Psoas muscle (tissue), 8 donors: ENCODE measurements at regions of chr13 and their contacts with region 1.

Region 1: DNA sequence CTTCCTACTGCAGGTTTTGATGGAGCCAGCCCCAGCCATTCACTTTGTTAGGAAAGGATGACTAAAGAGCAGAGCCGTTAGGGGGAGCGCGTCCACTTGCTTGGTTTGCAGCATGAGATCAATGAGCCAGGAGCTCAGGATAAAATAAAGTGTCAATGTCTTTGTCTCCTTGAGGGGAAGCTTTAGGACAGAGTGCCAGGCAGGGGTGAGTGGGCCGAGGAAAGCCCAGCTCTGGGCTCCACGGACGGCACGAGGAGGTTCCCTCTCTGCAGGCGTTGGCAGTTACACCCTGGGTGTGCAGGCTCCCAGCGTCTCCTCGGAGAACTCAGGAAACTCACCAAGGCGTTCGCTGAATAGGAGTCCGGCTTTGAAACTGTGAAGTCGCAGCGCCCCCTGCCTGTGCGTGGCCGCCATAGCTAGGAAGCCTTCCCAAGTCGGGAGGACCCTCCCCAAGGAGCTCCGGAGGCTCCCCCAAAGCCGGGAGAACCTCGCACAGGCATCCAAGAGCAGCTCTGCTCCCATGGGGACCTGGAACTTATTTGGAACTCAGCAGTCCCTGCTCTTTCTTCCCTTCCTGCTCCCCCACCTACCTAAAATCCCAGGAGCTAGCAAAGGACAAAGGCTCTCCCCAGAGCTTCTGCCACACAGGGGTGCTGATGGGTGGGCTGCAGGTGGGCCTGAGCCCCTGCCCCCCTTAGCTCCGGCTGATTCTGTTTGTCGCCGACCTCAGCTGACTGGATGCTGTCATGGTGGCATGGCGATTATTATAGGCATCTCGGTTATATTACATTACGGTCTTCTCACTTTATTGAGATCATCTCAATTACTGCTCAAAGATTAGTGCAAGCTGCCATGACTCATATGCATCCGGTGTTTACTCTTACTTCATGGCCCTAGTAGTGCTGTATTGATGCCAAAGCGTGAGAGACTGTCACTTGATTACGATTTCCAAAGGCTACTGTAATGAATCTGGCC is 34.4 kb downstream of the GSX1 start:
- DNase-seq: peak; percentile 69 to 81
- ATAC-seq: peak; percentile 86 to 96 (median 92)
- H3K4me3 ChIP-seq: peak overlapping the region; percentile 23
- H3K27ac ChIP-seq: no peak overlapping the region
- H3K4me1 ChIP-seq: peaks cover 5% of the 10 kb centered on the region
- H3K27me3 ChIP-seq: peaks cover 1 to 42% (median 5%) of the 10 kb centered on the region in 3 donors
- CTCF ChIP-seq: peak; percentile 93

Region 2: GRCh38 chr13:27362064-27362883 is 464.4 kb before region 1 on chr13:
- intact Hi-C with region 1: loop called (anchors 5 kb)
- DNase-seq: peak; percentile 84 to 91
- ATAC-seq: peak; percentile 96 to 99 (median 96)
- H3K4me3 ChIP-seq: peak overlapping the region; percentile 60
- H3K27ac ChIP-seq: no peak overlapping the region
- H3K4me1 ChIP-seq: no peaks in the 10 kb centered on the region
- H3K27me3 ChIP-seq: peaks cover 0 to 18% (median 0%) of the 10 kb centered on the region in 3 donors
- CTCF ChIP-seq: peak; percentile 93

Region 3: DNA sequence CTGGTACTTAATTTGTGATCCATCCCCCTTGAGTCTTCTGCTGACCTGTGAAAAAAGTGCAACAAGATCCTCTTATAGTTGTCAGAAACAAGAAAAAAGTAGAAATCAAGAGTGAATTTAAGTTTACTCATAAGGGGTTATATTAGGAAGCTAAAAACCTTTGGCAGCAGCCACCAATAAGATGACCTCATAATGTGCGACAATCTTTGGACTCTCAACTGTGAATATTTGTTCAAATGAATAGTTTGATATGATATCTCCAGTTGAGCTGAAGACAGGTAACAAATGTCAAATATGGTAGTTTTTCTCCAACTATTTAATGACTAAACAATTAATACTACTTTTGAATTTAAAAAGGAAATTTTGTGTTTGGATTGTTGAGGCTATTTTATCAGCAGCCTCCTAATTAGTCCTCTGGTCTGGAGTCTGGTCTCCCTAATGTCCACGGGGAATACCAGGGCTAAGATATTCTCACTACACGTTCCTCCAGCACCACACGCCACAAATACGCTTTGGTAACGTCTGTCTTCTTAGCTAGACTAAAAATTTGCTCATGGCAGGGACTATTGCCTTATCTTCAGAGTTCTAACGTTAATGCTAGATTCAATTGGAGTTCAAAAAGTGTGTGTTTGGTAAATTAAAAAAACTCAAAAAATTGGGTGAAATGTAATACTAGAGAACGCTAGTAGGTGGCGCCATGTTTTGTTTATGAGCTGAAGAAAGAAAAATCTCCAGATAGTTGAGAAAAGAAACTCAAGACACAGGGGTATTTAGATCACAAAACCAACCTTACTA is 42.2 kb after region 1 on chr13:
- intact Hi-C with region 1: no loop called
- DNase-seq: no peak
- ATAC-seq: no peak
- H3K4me3 ChIP-seq: no peak overlapping the region
- H3K27ac ChIP-seq: no peak overlapping the region
- H3K4me1 ChIP-seq: no peaks in the 10 kb centered on the region
- H3K27me3 ChIP-seq: peaks cover 0 to 9% (median 6%) of the 10 kb centered on the region in 3 donors
- CTCF ChIP-seq: peak; percentile 26

Region 4: DNA sequence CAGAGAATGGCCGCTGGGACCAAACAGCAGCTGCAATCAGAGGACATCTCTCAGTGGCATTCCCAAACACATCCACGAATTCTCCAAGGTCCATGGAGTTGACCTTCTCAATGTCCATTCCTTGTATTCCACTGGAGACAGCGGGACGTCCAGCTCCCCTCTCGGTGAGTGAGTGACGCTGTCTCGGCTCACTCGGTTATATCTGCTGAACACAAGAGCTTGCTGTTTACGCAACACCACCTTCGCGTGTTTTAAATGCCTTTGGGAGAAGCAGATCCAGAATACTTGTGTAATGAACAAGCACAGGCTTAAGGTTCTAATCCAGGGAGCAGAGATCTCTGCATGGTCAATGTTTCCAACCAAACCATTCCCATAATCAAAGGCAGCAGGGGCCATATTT is 161.9 kb after region 1 on chr13 and contains the start of gene URAD:
- intact Hi-C with region 1: loop called (anchors 2 to 5 kb)
- DNase-seq: no peak
- ATAC-seq: no peak
- H3K4me3 ChIP-seq: no peak within 1 kb of the TSS
- H3K27ac ChIP-seq: no peak within 1 kb of the TSS
- H3K4me1 ChIP-seq: no peaks in the 10 kb centered on the region
- H3K27me3 ChIP-seq: peaks cover 2 to 20% (median 10%) of the 10 kb centered on the region in 3 donors
- CTCF ChIP-seq: no peak
- total RNA-seq, gene URAD: not detected

Region 5: GRCh38 chr13:28012896-28013295 is 186.2 kb after region 1 on chr13:
- intact Hi-C with region 1: no loop called
- DNase-seq: no peak
- ATAC-seq: no peak
- H3K4me3 ChIP-seq: no peak overlapping the region
- H3K27ac ChIP-seq: no peak overlapping the region
- H3K4me1 ChIP-seq: no peaks in the 10 kb centered on the region
- H3K27me3 ChIP-seq: peaks cover 0 to 7% (median 3%) of the 10 kb centered on the region in 3 donors
- CTCF ChIP-seq: no peak